ENCODE measurements at regions of chr19 and their contacts with region 1.

Region 1: GRCh38 chr19:43532962-43533545 is at the start of gene ZNF575:
- DNase-seq: peak; percentile 95 to 96
- H3K4me3 ChIP-seq: peak within 1 kb of the TSS; percentile 60
- H3K4me3 Mint-ChIP-seq: peak within 1 kb of the TSS; percentile 96
- H3K27ac Mint-ChIP-seq: peak within 1 kb of the TSS; percentile 96
- H3K4me1 ChIP-seq: 0 out of 2 replicates have a peak, but pooled peaks cover 4% of the 10 kb centered on the region
- H3K4me1 Mint-ChIP-seq: peaks cover 6% of the 10 kb centered on the region
- H3K27me3 ChIP-seq: no peaks in the 10 kb centered on the region
- H3K27me3 Mint-ChIP-seq: no peaks in the 10 kb centered on the region
- CTCF ChIP-seq: peak in 1 of 2 experiments; percentile 9
- total RNA-seq, gene ZNF575: 1.00 and 1.2 TPM in 2 replicates

Region 2: GRCh38 chr19:43503501-43504425 is 29.3 kb before region 1 on chr19:
- CTCF ChIA-PET with region 1: interaction called, 9 read pairs
- POLR2A ChIA-PET with region 1: interaction called, 8 read pairs
- intact Hi-C with region 1: loop called (anchors 2 kb)
- DNase-seq: peak; percentile 98 to 99
- H3K4me3 ChIP-seq: peak overlapping the region; percentile 91
- H3K4me3 Mint-ChIP-seq: peak overlapping the region; percentile 90
- H3K27ac Mint-ChIP-seq: peak overlapping the region; percentile 92
- H3K4me1 ChIP-seq: peaks cover 25% of the 10 kb centered on the region
- H3K4me1 Mint-ChIP-seq: peaks cover 33% of the 10 kb centered on the region
- H3K27me3 ChIP-seq: no peaks in the 10 kb centered on the region
- H3K27me3 Mint-ChIP-seq: no peaks in the 10 kb centered on the region
- CTCF ChIP-seq: peak; percentile 49 to 64

Region 3: DNA sequence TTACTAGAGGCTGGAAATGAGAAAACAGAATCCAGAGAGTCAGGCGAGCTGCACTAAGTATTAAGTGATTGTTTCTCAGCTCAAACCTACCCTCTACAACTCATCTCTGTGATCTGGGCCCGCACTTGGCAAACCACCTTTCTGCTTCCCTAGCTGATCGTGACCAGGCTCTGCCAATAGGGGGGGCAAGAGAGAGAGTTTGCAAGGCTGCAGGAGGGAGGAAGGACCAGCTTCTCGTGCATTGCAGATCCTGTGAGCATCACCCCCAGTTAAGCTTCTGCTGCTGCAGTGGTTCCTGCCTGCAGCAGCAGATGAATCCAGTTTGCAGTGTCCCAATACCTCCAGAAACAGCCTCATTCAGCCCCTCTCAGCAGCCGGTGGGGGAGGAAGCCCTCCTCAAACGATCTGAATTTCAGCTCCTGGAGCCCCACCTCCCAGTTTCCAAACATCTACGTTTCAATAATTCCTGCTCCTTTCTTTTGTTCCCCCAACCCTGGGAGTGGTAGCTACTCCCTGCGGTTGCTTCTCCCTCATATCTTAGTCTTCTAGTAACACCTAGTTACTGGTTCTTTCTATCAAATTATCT is 22.2 kb after region 1 on chr19:
- CTCF ChIA-PET with region 1: interaction called, 14 read pairs
- POLR2A ChIA-PET with region 1: interaction called, 5 read pairs
- intact Hi-C with region 1: no loop called
- DNase-seq: peak; percentile 72 to 84
- H3K4me3 ChIP-seq: no peak overlapping the region
- H3K4me3 Mint-ChIP-seq: no peak overlapping the region
- H3K27ac Mint-ChIP-seq: no peak overlapping the region
- H3K4me1 ChIP-seq: no peaks in the 10 kb centered on the region
- H3K4me1 Mint-ChIP-seq: no peaks in the 10 kb centered on the region
- H3K27me3 ChIP-seq: no peaks in the 10 kb centered on the region
- H3K27me3 Mint-ChIP-seq: no peaks in the 10 kb centered on the region
- CTCF ChIP-seq: peak; percentile 79 to 90

Region 4: DNA sequence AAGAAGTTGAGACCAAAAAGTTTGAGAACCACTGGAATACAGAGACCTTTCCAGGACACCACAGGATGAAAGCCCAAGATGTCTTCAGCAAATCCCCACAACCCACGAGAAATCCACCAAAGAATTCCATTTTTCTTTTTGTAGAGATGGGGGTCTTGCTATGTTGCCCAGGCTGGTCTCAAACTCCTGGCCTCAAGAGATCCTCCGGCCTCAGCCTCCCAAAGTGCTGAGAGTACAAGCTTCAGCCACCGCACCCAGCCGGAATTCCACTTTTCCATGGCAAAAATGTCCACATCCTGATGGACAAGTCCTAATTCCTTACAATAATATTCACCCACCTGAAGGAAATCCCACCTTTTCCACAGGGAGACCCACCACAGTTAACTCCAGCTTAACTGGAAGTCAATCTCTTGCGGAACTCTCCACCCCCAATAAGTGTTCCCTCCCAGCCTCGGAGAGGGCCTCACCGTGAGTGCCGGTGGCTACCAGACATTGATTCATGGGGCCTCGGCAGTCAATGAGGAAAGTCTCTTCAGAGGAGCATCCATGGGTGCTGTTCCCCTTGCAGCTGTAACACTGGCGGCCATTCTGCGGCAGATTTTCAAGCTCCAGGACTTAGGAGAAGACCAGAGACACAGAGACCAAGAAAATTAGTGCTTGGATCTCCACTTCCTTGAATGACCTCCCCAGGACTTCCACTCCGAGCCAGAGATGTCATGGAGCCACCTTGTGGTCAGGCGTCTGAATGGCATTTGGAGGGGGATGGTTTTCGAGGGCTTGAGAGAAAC is 118.9 kb after region 1 on chr19:
- CTCF ChIA-PET with region 1: no interaction called
- POLR2A ChIA-PET with region 1: no interaction called
- intact Hi-C with region 1: loop called (anchors 10 kb)
- DNase-seq: peak; percentile 76 to 79
- H3K4me3 ChIP-seq: no peak overlapping the region
- H3K4me3 Mint-ChIP-seq: peak overlapping the region; percentile 37
- H3K27ac Mint-ChIP-seq: peak overlapping the region; percentile 36
- H3K4me1 ChIP-seq: no peaks in the 10 kb centered on the region
- H3K4me1 Mint-ChIP-seq: no peaks in the 10 kb centered on the region
- H3K27me3 ChIP-seq: no peaks in the 10 kb centered on the region
- H3K27me3 Mint-ChIP-seq: no peaks in the 10 kb centered on the region
- CTCF ChIP-seq: peak; percentile 79 to 94